Activated CD8-positive, alpha-beta T cell treated with anti-CD3 and anti-CD28 coated beads, Interleukin-2, amount 10 ng/mL, durations not matched to agents 7 days and 5 days (primary cell): ENCODE measurements at regions of chr15 and their contacts with region 1.

Region 1: DNA sequence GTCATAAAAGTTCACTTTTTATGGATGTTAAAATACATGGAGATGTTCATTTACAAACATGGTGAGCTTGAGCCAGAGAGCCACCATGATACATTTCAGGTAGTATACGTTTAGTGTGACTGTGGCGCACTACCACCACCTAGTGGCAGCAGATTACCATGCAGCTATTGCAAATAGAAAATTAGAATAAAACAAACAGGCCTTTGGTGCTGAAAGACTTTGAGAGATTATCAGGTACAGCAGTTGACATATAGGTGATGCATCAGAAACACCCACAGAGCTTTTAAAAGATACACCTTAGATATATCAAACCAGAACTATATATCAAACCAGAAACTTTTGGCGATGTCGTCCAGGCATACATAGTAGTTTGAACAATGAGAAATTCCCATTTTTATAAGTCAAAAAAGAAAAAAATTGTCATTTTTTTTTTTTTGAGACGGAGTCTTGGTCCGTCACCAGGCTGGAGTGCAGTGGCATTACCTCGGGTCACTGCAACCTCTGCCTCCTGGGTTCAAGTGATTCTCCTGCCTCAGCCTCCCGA is 42.0 kb upstream of the ICE2 start:
- DNase-seq: peak; percentile 88
- ATAC-seq: peak; percentile 75
- H3K4me3 Mint-ChIP-seq: no peak overlapping the region
- H3K27ac Mint-ChIP-seq: peak overlapping the region; percentile 44
- H3K4me1 Mint-ChIP-seq: peaks cover 30% of the 10 kb centered on the region
- H3K27me3 Mint-ChIP-seq: no peaks in the 10 kb centered on the region

Region 2: GRCh38 chr15:60362321-60363086 is 158.4 kb before region 1 on chr15:
- CTCF ChIA-PET with region 1: interaction called, 40 read pairs
- POLR2A ChIA-PET with region 1: interaction called, 4 read pairs
- DNase-seq: peak; percentile 41
- ATAC-seq: peak; percentile 80
- H3K4me3 Mint-ChIP-seq: no peak overlapping the region
- H3K27ac Mint-ChIP-seq: peak overlapping the region; percentile 35
- H3K4me1 Mint-ChIP-seq: peaks cover 26% of the 10 kb centered on the region
- H3K27me3 Mint-ChIP-seq: no peaks in the 10 kb centered on the region

Region 3: GRCh38 chr15:60507596-60508424 is 13.1 kb before region 1 on chr15:
- CTCF ChIA-PET with region 1: interaction called, 144 read pairs
- POLR2A ChIA-PET with region 1: interaction called, 8 read pairs
- DNase-seq: peak; percentile 75
- ATAC-seq: peak; percentile 80
- H3K4me3 Mint-ChIP-seq: peak overlapping the region; percentile 19
- H3K27ac Mint-ChIP-seq: peak overlapping the region; percentile 84
- H3K4me1 Mint-ChIP-seq: peaks cover 42% of the 10 kb centered on the region
- H3K27me3 Mint-ChIP-seq: no peaks in the 10 kb centered on the region

Region 4: DNA sequence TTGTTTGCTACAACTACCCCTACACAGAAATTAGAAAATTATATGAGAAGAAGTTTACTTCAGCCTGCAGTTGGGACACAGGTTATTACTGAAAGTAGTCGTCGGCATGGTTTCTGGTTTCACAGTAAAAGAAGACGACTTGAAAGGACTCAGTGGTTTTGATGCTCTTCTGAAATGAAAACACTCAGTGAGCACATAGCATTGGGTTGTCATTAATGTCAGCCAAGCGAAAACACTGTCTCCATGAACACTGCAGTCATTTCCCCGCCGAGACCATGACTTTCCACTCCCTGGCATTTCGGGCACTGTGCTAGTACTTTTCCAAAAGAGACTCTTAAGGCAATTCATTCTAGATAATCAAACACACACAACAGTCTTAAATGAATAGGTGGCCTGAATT is 27.2 kb after region 1 on chr15:
- CTCF ChIA-PET with region 1: interaction called, 111 read pairs
- POLR2A ChIA-PET with region 1: interaction called, 4 read pairs
- DNase-seq: peak; percentile 60
- ATAC-seq: peak; percentile 80
- H3K4me3 Mint-ChIP-seq: peak overlapping the region; percentile 60
- H3K27ac Mint-ChIP-seq: peak overlapping the region; percentile 90
- H3K4me1 Mint-ChIP-seq: peaks cover 94% of the 10 kb centered on the region
- H3K27me3 Mint-ChIP-seq: no peaks in the 10 kb centered on the region

Region 5: DNA sequence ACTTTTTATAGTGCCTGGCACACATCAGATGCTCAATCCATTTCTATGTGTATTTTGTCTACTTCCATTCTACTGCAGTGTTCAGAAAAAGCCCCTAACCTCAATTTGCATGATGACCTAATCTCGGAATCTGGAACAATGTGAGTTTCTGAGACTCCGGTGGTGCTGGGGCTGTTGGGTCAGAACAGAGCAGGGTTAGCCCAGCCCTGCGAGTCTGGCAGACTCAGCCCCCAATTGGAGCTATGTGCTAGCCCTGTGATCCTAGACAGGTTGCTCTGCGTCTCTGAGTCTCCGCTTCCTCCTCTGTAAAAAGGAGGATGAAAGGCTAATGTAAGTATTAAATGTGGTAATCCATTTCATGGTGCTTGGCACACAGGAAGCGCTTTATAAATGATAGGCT is 53.0 kb after region 1 on chr15:
- CTCF ChIA-PET with region 1: interaction called, 34 read pairs
- POLR2A ChIA-PET with region 1: interaction called, 3 read pairs
- DNase-seq: no peak
- ATAC-seq: peak; percentile 55
- H3K4me3 Mint-ChIP-seq: peak overlapping the region; percentile 42
- H3K27ac Mint-ChIP-seq: peak overlapping the region; percentile 72
- H3K4me1 Mint-ChIP-seq: peaks cover 84% of the 10 kb centered on the region
- H3K27me3 Mint-ChIP-seq: no peaks in the 10 kb centered on the region

Region 6: GRCh38 chr15:60667190-60667868 is 146.4 kb after region 1 on chr15:
- CTCF ChIA-PET with region 1: no interaction called
- POLR2A ChIA-PET with region 1: no interaction called
- DNase-seq: no peak
- ATAC-seq: no peak
- H3K4me3 Mint-ChIP-seq: no peak overlapping the region
- H3K27ac Mint-ChIP-seq: peak overlapping the region; percentile 51
- H3K4me1 Mint-ChIP-seq: no peaks in the 10 kb centered on the region
- H3K27me3 Mint-ChIP-seq: peaks cover 6% of the 10 kb centered on the region